Activated B cell treated with CpG ODN at 0.5 μM for 24 hours (primary cell): ENCODE measurements at regions of chr3 and their contacts with region 1.

Region 1: DNA sequence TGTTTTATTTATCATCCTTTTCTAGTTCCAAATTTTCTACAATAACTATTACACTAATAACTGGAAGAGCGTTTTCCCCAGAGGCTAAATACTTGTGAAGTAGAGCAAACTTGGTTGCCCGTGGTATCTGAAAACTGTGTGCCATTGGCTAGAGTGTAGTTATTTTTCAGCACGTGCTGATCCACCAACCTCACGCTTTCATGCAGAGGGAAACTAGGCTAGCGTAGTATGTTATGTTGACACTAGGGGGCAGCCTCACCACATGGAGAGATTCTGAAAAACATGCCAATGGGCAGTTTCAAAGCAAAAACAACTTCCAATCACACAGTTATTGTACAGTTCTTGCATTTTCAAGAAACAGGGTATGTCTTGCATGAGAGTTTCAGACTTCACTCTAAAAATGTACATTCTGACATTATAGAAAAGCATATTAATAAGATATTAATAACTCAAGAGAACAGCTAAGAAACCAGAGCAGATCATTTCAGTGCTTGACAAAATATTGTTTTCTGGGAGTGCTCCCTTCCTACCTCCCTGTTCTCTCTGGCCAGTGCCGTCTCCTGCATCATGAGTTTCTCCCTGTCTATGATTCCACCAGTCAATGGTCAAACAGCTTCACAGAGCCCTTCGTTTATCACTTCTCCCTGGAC is 39.7 kb downstream of the SPATA12 start:
- DNase-seq: no peak
- ATAC-seq: peak; percentile 88
- H3K4me3 Mint-ChIP-seq: no peak overlapping the region
- H3K27ac Mint-ChIP-seq: no peak overlapping the region
- H3K4me1 Mint-ChIP-seq: no peaks in the 10 kb centered on the region
- H3K27me3 Mint-ChIP-seq: peaks cover 2% of the 10 kb centered on the region
- CTCF ChIP-seq: peak; percentile 84

Region 2: DNA sequence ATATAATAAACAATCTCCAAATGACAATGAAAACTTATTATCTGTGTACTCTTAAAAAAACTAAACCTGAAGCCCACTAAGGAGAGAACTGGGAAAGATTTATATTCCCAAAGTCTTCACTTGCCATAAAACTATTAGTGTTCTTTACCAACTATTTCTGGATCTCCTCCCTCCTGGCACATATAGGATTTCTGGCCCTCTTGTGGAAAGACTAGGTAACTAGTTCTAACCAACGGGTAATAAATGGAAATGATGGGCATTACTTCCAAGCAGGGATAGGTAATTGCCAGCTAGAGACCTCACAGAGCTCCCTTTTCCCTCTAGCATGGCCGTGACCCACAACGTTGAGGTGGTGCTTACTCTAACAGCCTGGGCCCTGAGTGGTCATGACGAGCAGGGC is 333.9 kb after region 1 on chr3:
- CTCF ChIA-PET with region 1: no interaction called
- POLR2A ChIA-PET with region 1: no interaction called
- intact Hi-C with region 1: loop called (anchors 1 kb)
- DNase-seq: no peak
- ATAC-seq: no peak
- H3K4me3 Mint-ChIP-seq: no peak overlapping the region
- H3K27ac Mint-ChIP-seq: no peak overlapping the region
- H3K4me1 Mint-ChIP-seq: no peaks in the 10 kb centered on the region
- H3K27me3 Mint-ChIP-seq: peaks cover 12% of the 10 kb centered on the region
- CTCF ChIP-seq: no peak

Region 3: GRCh38 chr3:57910988-57911387 is 810.8 kb after region 1 on chr3:
- CTCF ChIA-PET with region 1: interaction called, 3 read pairs
- POLR2A ChIA-PET with region 1: no interaction called
- intact Hi-C with region 1: loop called (anchors 1 kb)
- DNase-seq: no peak
- ATAC-seq: no peak
- H3K4me3 Mint-ChIP-seq: no peak overlapping the region
- H3K27ac Mint-ChIP-seq: no peak overlapping the region
- H3K4me1 Mint-ChIP-seq: no peaks in the 10 kb centered on the region
- H3K27me3 Mint-ChIP-seq: no peaks in the 10 kb centered on the region
- CTCF ChIP-seq: no peak